ENCODE measurements at regions of chr16 and their contacts with region 1.

Region 1: DNA sequence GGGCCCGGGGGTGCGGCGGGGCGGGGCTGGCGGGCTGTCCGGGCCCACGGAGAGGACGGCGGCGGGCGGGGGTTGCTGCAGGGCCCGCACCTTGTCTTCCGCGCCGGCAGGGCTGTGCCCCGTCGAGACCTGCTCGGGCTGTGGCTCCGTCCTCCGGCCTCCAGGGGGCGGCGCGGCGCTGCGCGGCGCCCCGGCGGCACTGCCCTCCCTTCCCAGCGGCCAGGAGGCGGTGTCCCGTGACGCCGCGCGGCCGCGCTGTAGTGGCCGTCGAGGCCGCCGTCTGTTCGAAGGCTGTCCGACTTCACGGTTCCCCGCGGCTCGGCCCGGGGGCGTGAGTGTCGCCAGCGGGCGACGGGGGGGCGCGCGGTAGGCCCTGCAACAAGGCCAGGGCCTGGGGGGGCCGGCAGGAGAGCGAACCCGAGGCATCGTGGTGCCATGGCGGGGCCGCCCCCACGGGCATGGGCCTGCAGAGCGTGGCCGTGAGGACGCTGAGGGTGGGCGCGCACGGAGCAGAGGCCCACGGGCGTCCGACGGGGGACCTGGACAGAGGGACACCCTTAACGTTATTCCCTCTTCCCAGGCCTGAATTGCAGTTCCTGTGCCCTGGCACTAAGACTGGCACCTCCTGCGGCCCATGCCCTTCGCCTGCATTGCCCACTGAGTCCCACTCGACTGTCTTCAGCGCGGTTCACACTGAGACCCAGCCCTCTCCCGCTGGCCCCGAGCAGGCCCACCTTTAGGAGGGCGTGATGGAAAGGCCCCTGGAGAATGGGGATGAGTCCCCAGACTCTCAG is at the start of gene PLEKHG4:
- DNase-seq: peak; percentile 92
- ATAC-seq: peak; percentile 93
- H3K4me3 Mint-ChIP-seq: peak within 1 kb of the TSS; percentile 85
- H3K27ac Mint-ChIP-seq: peak within 1 kb of the TSS; percentile 90
- H3K4me1 Mint-ChIP-seq: peaks cover 19% of the 10 kb centered on the region
- H3K27me3 Mint-ChIP-seq: no peaks in the 10 kb centered on the region
- total RNA-seq, gene PLEKHG4: 21.1 to 23.1 TPM

Region 2: DNA sequence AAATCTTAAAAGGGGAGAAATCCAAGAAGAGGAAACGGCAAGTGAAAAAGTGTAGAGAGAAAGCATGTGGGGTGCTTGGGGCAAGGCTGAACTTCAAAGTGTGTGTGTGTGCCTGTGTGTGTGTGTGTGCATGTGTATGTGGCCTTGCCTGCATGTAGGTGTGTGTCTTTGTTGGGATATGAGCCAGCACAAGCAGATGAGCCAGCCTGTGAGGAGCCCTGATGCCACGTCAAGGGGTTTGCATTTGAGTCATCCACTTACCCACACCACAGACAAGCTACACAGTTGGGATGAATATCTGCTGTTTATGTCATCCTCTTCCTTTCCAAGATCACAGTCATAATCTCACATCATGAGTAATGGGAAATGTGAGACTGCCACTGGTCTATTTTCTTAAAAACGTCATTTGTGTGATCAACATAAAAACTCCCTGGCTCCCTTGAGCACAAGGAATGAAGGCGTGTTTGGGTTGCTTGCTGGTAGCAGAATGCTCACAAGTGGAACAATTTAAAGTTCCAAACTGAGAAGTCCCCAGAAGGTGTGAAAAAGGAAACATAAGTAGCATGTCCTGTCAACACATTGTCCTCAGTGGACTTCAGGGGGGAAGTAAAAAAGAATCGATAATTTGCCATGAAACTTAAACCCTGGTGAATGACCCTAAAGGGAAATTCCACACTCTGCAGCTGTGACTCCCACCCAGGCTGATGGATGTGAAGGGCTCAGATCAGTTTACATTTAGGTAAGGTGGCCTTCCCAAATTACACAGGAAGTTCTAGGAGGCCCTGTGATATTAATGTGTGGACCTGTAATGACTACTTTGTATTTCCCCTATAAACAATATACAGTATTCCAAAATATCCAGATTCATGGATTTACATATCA is 32.4 kb after region 1 on chr16:
- CTCF ChIA-PET with region 1: interaction called, 4 read pairs
- POLR2A ChIA-PET with region 1: no interaction called
- intact Hi-C with region 1: loop called (anchors 1 kb)
- DNase-seq: peak; percentile 94
- ATAC-seq: peak; percentile 98
- H3K4me3 Mint-ChIP-seq: peak overlapping the region; percentile 1
- H3K27ac Mint-ChIP-seq: peak overlapping the region; percentile 98
- H3K4me1 Mint-ChIP-seq: peaks cover 40% of the 10 kb centered on the region
- H3K27me3 Mint-ChIP-seq: peaks cover 1% of the 10 kb centered on the region

Region 3: GRCh38 chr16:67326472-67327309 is 47.2 kb after region 1 on chr16 and contains the starts of genes KCTD19 and LRRC36:
- CTCF ChIA-PET with region 1: interaction called, 7 read pairs
- POLR2A ChIA-PET with region 1: no interaction called
- intact Hi-C with region 1: loop called in 1 of 2 experiments (anchors 1 kb)
- DNase-seq: peak; percentile 82
- ATAC-seq: peak; percentile 91
- H3K4me3 Mint-ChIP-seq: peak within 1 kb of the TSS; percentile 76
- H3K27ac Mint-ChIP-seq: peak within 1 kb of the TSS; percentile 72
- H3K4me1 Mint-ChIP-seq: peaks cover 7% of the 10 kb centered on the region
- H3K27me3 Mint-ChIP-seq: peaks cover 38% of the 10 kb centered on the region
- total RNA-seq, gene KCTD19: 1.8 to 2.0 TPM
- total RNA-seq, gene LRRC36: 0.51 to 0.66 TPM

Region 4: GRCh38 chr16:67339453-67339852 is 60.0 kb after region 1 on chr16:
- CTCF ChIA-PET with region 1: no interaction called
- POLR2A ChIA-PET with region 1: no interaction called
- intact Hi-C with region 1: loop called in 1 of 2 experiments (anchors 1 kb)
- DNase-seq: no peak
- ATAC-seq: no peak
- H3K4me3 Mint-ChIP-seq: no peak overlapping the region
- H3K27ac Mint-ChIP-seq: no peak overlapping the region
- H3K4me1 Mint-ChIP-seq: no peaks in the 10 kb centered on the region
- H3K27me3 Mint-ChIP-seq: peaks cover 3% of the 10 kb centered on the region

Region 5: GRCh38 chr16:67399181-67399733 is 119.8 kb after region 1 on chr16:
- CTCF ChIA-PET with region 1: interaction called, 3 read pairs
- POLR2A ChIA-PET with region 1: no interaction called
- intact Hi-C with region 1: loop called (anchors 1 to 2 kb)
- DNase-seq: peak; percentile 78
- ATAC-seq: peak; percentile 91
- H3K4me3 Mint-ChIP-seq: no peak overlapping the region
- H3K27ac Mint-ChIP-seq: no peak overlapping the region
- H3K4me1 Mint-ChIP-seq: peaks cover under 1% of the 10 kb centered on the region
- H3K27me3 Mint-ChIP-seq: peaks cover 21% of the 10 kb centered on the region

Region 6: GRCh38 chr16:67415872-67416793 is 136.6 kb after region 1 on chr16 and contains the start of gene ZDHHC1:
- CTCF ChIA-PET with region 1: interaction called, 5 read pairs
- POLR2A ChIA-PET with region 1: no interaction called
- intact Hi-C with region 1: loop called in 1 of 2 experiments (anchors 1 kb)
- DNase-seq: peak; percentile 71
- ATAC-seq: peak; percentile 93
- H3K4me3 Mint-ChIP-seq: peak within 1 kb of the TSS; percentile 64
- H3K27ac Mint-ChIP-seq: peak within 1 kb of the TSS; percentile 43
- H3K4me1 Mint-ChIP-seq: peaks cover 5% of the 10 kb centered on the region
- H3K27me3 Mint-ChIP-seq: peaks cover 25% of the 10 kb centered on the region
- total RNA-seq, gene ZDHHC1: 0.58 to 0.98 TPM

Region 7: GRCh38 chr16:67470359-67470758 is 190.9 kb after region 1 on chr16:
- CTCF ChIA-PET with region 1: interaction called, 3 read pairs
- POLR2A ChIA-PET with region 1: no interaction called
- intact Hi-C with region 1: loop called in 1 of 2 experiments (anchors 5 kb)
- DNase-seq: no peak
- ATAC-seq: no peak
- H3K4me3 Mint-ChIP-seq: no peak overlapping the region
- H3K27ac Mint-ChIP-seq: peak overlapping the region; percentile 0
- H3K4me1 Mint-ChIP-seq: peaks cover 17% of the 10 kb centered on the region
- H3K27me3 Mint-ChIP-seq: no peaks in the 10 kb centered on the region